ENCODE measurements at regions of chr11 and their contacts with region 1.

Region 1: DNA sequence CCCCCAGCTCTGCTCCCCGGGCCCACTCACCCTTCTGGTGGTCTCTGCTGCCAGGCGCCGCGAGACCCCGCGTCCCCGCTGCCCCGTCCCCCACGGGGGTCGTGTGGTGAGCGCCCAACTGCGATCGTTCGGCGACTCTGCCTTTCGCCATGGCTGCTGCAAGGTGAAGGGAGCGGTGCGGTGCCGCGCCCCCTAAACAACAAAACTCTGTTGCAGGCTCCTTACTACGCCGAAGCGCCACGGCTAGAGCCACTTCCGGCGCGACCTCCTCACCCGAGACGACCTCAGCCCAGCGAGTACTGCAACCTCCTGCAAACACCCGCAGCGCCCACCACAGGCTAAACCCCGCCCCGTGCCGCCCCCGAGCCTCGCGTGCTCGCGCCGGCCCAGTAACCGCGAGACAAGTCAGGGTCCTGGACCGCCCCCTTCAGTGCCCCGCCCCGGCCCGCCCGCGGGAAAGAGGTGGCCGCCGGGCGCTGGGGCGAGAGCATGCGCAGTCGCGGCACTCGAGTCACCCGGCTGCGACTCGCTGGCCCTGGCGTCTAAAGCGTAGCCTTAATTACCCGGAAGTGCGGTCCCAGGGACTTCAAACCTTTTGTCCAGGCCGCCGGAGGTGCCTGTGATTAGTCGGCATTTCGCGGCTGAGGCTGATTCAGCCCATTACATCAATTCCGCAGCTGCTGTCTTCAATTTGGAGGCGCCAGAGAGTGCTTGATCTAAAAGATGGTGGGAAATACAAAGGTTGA is at the start of gene TMEM41B:
- DNase-seq: peak; percentile 99
- H3K4me3 ChIP-seq: peak within 1 kb of the TSS; percentile 82 to 99 (median 95)
- H3K27ac ChIP-seq: peak within 1 kb of the TSS; percentile 83 to 87 (median 85)
- H3K4me1 ChIP-seq: peaks cover 0 to 29% (median 23%) of the 10 kb centered on the region in 4 donors
- H3K27me3 ChIP-seq: peaks cover 0 to 14% (median 0%) of the 10 kb centered on the region in 4 donors
- CTCF ChIP-seq: peak in 1 of 3 experiments; percentile 18
- EP300 ChIP-seq: no peak
- POLR2A ChIP-seq: peak; percentile 36
- total RNA-seq, gene TMEM41B: 13.3 to 21.1 (median 17.4) TPM

Region 2: DNA sequence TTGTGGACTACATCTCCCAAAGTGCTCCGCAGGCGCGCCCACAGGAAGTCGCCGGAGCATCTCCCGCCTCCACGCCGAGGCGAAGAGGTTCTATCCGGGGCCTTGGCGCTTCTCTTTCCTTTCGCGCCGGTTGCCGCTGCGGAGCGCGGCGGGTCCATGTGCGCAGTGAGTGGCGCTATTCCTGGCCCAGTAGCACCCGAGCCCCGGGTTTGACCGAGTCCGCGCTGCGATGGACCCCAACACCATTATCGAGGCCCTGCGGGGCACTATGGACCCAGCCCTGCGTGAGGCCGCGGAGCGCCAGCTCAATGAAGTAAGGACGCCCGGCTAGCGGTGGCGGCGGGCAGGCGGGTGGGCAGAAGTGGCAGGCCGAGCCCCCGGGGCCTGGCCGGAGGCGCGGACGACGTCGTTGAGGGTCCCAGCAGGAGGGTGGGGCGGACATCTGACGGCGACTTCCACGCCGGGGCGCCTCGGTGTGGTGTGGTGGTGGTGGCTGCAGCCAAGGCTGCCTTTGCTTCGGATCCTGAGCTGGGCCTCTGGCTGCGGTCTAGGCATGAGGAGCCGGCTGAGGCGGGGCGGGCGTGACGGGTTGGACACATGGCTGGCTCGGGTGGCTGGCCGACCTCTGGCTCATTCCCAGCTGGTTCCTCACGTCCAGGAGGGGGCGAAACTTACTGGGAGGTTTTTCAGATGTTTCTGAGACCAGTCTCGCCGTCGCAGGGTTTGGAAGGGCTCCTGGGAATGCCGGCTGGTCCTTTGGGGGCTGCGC is 70.3 kb after region 1 on chr11 and contains the start of gene IPO7:
- intact Hi-C with region 1: loop called (anchors 5 kb)
- DNase-seq: peak; percentile 94
- H3K4me3 ChIP-seq: peak within 1 kb of the TSS; percentile 76 to 95 (median 94)
- H3K27ac ChIP-seq: peak within 1 kb of the TSS; percentile 93 to 99 (median 96)
- H3K4me1 ChIP-seq: peaks cover 33 to 65% (median 63%) of the 10 kb centered on the region in 4 donors
- H3K27me3 ChIP-seq: no peaks in the 10 kb centered on the region
- CTCF ChIP-seq: peak in 2 of 3 experiments; percentile 34 to 36
- EP300 ChIP-seq: no peak
- POLR2A ChIP-seq: peak; percentile 88
- total RNA-seq, gene IPO7: 131 to 186 (median 150) TPM

Region 3: GRCh38 chr11:9460322-9461067 is 146.0 kb after region 1 on chr11 and contains the start of gene ZNF143:
- intact Hi-C with region 1: loop called (anchors 10 kb)
- DNase-seq: peak; percentile 100
- H3K4me3 ChIP-seq: peak within 1 kb of the TSS; percentile 73 to 94 (median 78)
- H3K27ac ChIP-seq: peak within 1 kb of the TSS; percentile 94 to 99 (median 97)
- H3K4me1 ChIP-seq: peaks cover 22 to 35% (median 28%) of the 10 kb centered on the region in 4 donors
- H3K27me3 ChIP-seq: no peaks in the 10 kb centered on the region
- CTCF ChIP-seq: peak in 1 of 3 experiments; percentile 35
- EP300 ChIP-seq: no peak
- POLR2A ChIP-seq: peak; percentile 98
- total RNA-seq, gene ZNF143: 30.0 to 38.8 (median 34.5) TPM

Measured in esophagus muscularis mucosa (tissue), 4 donors.